Esophagus muscularis mucosa (tissue), 4 donors: ENCODE measurements at regions of chr5 and their contacts with region 1.

Region 1: GRCh38 chr5:127290019-127290945 is at the start of gene MEGF10:
- DNase-seq: no peak
- H3K4me3 ChIP-seq: peak within 1 kb of the TSS; percentile 40 to 50 (median 42)
- H3K27ac ChIP-seq: no peak within 1 kb of the TSS
- H3K4me1 ChIP-seq: peaks cover 9 to 14% (median 13%) of the 10 kb centered on the region in 4 donors
- H3K27me3 ChIP-seq: peaks cover 0 to 36% (median 12%) of the 10 kb centered on the region in 4 donors
- CTCF ChIP-seq: peak; percentile 33 to 51 (median 49)
- EP300 ChIP-seq: no peak
- POLR2A ChIP-seq: no peak
- total RNA-seq, gene MEGF10: 0.50 to 2.9 (median 0.95) TPM

Region 2: DNA sequence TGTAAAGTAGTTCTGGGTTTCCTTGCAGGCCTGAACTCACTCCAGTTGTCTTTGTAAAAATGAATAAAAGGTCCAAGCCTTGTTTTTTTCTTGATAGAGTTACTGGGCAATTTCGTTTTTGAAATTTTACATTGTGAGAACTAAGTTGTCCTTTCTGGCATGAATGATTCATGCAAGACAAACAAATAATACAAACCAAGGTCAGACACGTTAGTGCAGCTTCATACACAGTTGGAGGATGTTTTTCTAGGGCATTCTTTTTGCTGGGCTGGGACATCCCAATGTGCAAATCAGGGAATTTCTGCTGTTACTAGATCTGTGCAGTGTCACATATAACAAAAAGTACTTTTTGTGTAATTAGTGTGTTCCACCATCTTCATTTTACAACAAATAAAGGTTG is 96.3 kb after region 1 on chr5:
- intact Hi-C with region 1: no loop called
- DNase-seq: no peak
- H3K4me3 ChIP-seq: no peak overlapping the region
- H3K27ac ChIP-seq: no peak overlapping the region
- H3K4me1 ChIP-seq: no peaks in the 10 kb centered on the region
- H3K27me3 ChIP-seq: no peaks in the 10 kb centered on the region
- CTCF ChIP-seq: no peak
- EP300 ChIP-seq: no peak
- POLR2A ChIP-seq: no peak

Region 3: GRCh38 chr5:127441799-127442484 is 151.7 kb after region 1 on chr5:
- intact Hi-C with region 1: loop called (anchors 10 kb)
- DNase-seq: no peak
- H3K4me3 ChIP-seq: no peak overlapping the region
- H3K27ac ChIP-seq: no peak overlapping the region
- H3K4me1 ChIP-seq: no peaks in the 10 kb centered on the region
- H3K27me3 ChIP-seq: no peaks in the 10 kb centered on the region
- CTCF ChIP-seq: peak in 2 of 3 experiments; percentile 5 to 13
- EP300 ChIP-seq: no peak
- POLR2A ChIP-seq: no peak

Region 4: DNA sequence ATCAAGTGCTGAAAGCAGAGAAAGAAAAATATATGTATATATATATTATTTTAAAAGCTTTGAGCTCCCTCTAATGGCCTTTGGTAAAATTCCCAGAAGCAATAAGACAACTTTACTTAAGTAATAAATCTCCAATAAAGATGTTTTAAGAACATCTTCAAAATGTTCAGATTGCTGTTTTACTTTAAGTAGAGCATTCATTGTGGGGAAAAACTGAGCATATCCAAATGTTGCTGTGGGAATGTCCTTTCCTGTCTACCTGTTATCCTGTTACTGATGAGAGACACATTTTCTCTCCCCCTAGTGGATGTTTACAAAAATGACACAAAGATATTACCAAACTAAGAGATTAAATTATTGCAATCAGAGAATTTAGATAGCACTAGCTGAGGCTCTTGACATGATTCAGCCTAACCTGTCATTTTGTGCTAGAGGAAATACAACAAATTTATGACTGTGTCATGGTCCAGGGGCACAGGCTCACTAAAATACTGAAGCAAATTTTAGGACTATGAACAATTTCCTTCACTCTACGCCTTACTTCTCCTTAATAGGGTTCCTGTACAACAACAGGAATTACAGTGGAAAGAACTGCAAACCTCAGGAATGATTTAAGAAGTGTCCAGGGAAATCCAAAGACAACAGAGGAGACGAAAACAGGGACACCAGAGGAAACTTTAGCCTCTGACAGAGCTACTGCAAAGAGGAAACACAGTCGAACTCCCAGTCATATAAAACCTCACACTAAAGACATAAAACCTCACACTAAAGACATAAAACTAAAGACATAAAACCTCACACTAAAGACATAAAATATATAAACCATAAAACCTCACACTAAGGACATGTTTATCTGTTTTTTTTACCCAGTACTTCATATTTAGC is 202.8 kb after region 1 on chr5:
- intact Hi-C with region 1: loop called (anchors 10 kb)
- DNase-seq: no peak
- H3K4me3 ChIP-seq: no peak overlapping the region
- H3K27ac ChIP-seq: no peak overlapping the region
- H3K4me1 ChIP-seq: no peaks in the 10 kb centered on the region
- H3K27me3 ChIP-seq: no peaks in the 10 kb centered on the region
- CTCF ChIP-seq: peak; percentile 59 to 71 (median 62)
- EP300 ChIP-seq: no peak
- POLR2A ChIP-seq: no peak

Region 5: GRCh38 chr5:127572930-127573329 is 282.6 kb after region 1 on chr5:
- intact Hi-C with region 1: no loop called
- DNase-seq: no peak
- H3K4me3 ChIP-seq: no peak overlapping the region
- H3K27ac ChIP-seq: no peak overlapping the region
- H3K4me1 ChIP-seq: peaks cover 0 to 13% (median 4%) of the 10 kb centered on the region in 4 donors
- H3K27me3 ChIP-seq: no peaks in the 10 kb centered on the region
- CTCF ChIP-seq: peak; percentile 17 to 34 (median 24)
- EP300 ChIP-seq: no peak
- POLR2A ChIP-seq: no peak